ENCODE measurements at regions of chr17 and their contacts with region 1.

Region 1: GRCh38 chr17:59762513-59763374 is 55.3 kb downstream of the VMP1 start:
- DNase-seq: peak; percentile 51
- H3K4me3 Mint-ChIP-seq: peak overlapping the region; percentile 35
- H3K27ac Mint-ChIP-seq: peak overlapping the region; percentile 98
- H3K4me1 Mint-ChIP-seq: peaks cover 67% of the 10 kb centered on the region
- H3K27me3 Mint-ChIP-seq: no peaks in the 10 kb centered on the region

Region 2: GRCh38 chr17:58337600-58338453 is 1424.9 kb before region 1 on chr17:
- CTCF ChIA-PET with region 1: no interaction called
- intact Hi-C with region 1: loop called (anchors 10 kb)
- DNase-seq: peak; percentile 98
- H3K4me3 Mint-ChIP-seq: peak overlapping the region; percentile 92
- H3K27ac Mint-ChIP-seq: peak overlapping the region; percentile 99
- H3K4me1 Mint-ChIP-seq: peaks cover 7% of the 10 kb centered on the region
- H3K27me3 Mint-ChIP-seq: no peaks in the 10 kb centered on the region

Region 3: GRCh38 chr17:59829217-59830006 is 66.7 kb after region 1 on chr17:
- CTCF ChIA-PET with region 1: interaction called, 3 read pairs
- intact Hi-C with region 1: loop called (anchors 1 kb)
- DNase-seq: peak; percentile 79
- H3K4me3 Mint-ChIP-seq: peak overlapping the region; percentile 77
- H3K27ac Mint-ChIP-seq: peak overlapping the region; percentile 99
- H3K4me1 Mint-ChIP-seq: peaks cover 85% of the 10 kb centered on the region
- H3K27me3 Mint-ChIP-seq: no peaks in the 10 kb centered on the region

Region 4: DNA sequence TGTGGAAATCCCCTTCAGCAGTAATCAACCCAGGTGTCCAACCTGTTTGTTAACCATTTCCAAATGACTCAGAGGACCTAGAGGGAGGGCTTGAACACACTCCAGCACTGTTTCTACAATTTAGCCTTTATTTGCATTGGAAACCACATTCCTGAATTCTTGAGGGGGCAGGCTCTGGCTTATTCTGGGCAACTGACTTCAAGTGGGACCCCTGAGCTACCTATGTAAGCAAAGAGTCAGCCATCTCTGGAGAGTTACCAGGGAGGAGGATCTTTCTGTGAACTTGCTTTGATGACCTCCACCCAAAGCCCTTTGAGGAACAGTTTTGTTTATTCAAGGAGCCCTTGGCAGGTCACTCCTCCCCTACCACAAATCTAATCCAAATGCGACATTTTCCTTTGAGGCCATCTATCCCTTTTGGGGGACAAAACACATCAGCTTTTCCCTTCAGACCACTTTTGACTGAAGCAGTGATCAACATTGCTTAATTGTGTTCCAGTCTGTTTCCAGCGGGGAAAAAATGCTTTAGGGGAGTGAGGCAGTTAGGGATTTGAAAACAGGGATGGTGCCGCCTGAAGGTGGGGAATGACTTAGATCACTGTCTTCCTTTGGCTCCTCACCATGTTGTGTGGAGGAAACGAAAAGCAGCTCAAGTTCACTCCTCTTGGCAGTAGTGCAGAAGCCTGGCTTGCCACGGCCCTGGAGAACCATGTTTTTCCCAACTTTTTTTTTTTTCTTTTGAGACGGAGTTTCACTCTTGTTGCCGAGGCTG is 83.8 kb after region 1 on chr17:
- CTCF ChIA-PET with region 1: interaction called, 3 read pairs
- intact Hi-C with region 1: loop called (anchors 1 kb)
- DNase-seq: peak; percentile 53
- H3K4me3 Mint-ChIP-seq: peak overlapping the region; percentile 28
- H3K27ac Mint-ChIP-seq: peak overlapping the region; percentile 100
- H3K4me1 Mint-ChIP-seq: peaks cover 76% of the 10 kb centered on the region
- H3K27me3 Mint-ChIP-seq: no peaks in the 10 kb centered on the region

Region 5: DNA sequence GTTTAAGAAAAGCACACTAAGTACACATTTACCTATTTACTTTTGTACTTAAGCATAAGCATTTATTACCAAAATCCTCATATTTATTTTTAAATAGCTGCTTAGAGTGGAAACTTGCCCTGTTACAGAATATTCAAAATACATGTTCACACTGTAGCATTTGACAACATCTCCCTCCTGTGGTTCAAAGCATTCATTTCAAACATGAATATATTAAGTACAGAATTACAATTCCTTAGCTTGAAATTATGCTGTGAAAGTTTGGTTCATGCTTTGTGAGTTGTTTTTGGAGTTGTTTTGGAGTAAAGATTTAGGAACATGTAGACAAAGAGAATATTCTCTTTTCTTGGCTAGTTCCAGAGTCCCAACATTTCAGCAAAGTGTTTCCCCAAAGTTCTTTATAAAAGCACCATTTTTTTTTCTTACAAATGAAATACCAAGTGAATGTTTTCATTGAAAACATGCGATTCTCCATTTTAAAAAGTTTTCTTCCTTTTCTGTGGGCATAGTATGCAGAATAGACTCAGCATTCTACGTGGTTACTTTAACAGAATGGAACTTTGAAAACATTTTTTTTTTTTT is 96.8 kb after region 1 on chr17:
- CTCF ChIA-PET with region 1: interaction called, 11 read pairs
- intact Hi-C with region 1: no loop called
- DNase-seq: no peak
- H3K4me3 Mint-ChIP-seq: no peak overlapping the region
- H3K27ac Mint-ChIP-seq: peak overlapping the region; percentile 65
- H3K4me1 Mint-ChIP-seq: peaks cover 21% of the 10 kb centered on the region
- H3K27me3 Mint-ChIP-seq: no peaks in the 10 kb centered on the region

Measured in activated naive CD4-positive, alpha-beta T cell treated with anti-CD3 and anti-CD28 coated beads for 36 hours (primary cell).